Tibial artery (tissue), 4 donors: ENCODE measurements at regions of chr10 and their contacts with region 1.

Region 1: DNA sequence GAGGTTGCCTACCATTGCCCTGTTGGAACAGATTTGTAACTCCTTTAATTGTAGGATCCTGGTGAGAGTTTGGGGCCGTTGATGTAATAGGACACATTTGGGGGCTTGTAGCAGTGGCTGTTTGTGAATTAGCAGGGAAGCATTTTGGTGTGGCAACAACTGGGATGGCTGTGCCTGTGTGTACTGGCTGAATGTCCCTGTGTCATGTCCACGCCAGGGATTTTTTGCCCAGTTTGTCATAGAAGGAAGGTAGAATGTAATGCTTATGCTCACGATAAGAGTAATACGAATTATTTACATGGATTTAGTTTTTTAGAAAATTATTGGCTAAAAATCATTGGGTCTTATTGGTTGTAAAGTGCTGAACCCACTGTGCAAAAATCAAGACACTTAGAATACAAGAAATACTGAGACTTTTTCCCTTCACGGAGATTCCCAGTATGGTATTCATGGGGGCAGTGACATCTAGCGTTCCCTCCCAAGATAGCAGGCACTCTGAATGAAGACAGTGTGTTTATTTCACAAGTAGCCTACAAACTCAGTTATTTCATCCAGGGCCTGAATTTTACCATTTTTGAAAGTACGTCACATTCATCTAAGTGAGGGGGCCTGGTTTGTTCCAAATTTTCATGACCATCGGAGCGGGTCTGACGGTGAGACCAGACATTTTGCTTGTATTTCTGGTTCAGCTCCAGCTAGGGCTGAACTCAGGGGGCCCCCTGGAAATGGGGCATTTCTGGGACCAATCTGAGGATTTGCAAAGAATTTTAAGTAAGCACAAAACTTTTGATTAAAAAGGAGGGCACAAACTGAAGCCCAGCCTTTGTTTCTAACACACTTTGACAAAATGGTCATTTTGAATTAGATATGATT is 74.7 kb downstream of the CACNB2 start:
- DNase-seq: peak in 1 of 2 donors; percentile 53
- H3K4me3 ChIP-seq: no peak overlapping the region
- H3K27ac ChIP-seq: no peak overlapping the region
- H3K4me1 ChIP-seq: peaks cover 0 to 3% (median 0%) of the 10 kb centered on the region in 4 donors
- H3K27me3 ChIP-seq: no peaks in the 10 kb centered on the region
- CTCF ChIP-seq: peak; percentile 88 to 89

Region 2: DNA sequence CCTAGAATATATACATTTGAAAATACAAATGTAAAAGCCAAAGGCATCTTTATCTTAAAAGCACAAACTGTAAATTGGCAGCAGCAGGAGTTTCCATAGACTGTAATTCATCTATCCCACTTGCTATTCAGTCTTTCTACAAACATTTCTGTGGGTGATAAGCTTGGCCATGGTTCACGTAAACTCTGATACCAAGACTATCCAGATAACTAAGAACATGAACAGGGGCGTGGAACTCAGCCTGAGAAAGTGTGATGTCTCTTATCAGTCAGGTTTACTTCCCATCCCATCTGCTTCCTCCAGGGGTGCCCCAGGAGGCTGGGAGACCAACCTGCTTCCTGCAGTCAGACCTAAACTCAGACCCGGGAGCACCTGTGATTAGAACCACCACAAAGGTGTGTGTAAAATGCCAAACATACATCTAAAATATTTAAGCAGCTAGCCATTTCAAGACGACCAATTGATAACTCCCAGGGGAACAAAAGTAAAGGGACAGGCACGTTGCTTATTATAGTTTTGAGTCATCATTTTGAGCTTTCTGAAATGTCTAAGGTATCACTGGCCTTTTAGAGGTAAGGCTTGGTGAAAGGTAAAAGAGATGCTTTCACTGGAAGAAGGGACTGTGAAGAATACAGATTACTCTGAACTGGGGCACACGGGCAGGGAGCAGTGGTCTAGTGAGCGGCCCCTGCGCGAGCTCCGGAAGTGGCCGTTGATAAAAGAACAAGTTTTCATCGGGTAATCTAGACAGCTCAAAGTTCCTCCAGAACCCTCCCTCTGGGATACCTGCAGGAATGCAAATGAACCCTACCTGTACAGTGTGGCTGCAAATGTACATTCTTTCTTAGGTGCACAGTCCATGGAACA is 1449.2 kb before region 1 on chr10:
- intact Hi-C with region 1: no loop called
- DNase-seq: no peak
- H3K4me3 ChIP-seq: no peak overlapping the region
- H3K27ac ChIP-seq: no peak overlapping the region
- H3K4me1 ChIP-seq: peaks cover 0 to 5% (median 0%) of the 10 kb centered on the region in 4 donors
- H3K27me3 ChIP-seq: no peaks in the 10 kb centered on the region
- CTCF ChIP-seq: no peak

Region 3: DNA sequence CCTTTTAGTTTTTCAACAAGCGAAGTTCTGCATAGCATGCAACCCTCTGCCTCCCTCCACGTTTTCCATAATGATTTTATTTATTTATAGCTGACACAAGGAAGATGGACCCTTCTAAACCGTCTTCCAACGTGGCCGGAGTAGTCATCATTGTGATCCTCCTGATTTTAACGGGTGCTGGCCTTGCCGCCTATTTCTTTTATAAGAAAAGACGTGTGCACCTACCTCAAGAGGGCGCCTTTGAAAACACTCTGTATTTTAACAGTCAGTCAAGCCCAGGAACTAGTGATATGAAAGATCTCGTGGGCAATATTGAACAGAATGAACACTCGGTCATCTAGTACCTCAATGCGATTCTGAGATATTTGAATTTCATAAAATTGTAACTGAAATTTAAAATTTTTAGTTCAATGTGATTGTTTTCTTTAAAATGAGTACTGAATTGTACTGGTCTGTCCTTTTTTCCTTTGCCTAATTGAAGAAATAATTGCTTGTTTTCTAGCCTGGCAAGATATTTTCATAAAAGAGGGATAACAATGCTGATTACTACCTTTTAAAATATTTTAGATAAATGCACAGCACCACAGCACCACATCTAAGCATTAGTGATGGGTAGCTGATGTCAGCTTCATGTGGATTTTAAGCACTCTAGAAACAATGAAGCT is 304.7 kb before region 1 on chr10:
- intact Hi-C with region 1: loop called (anchors 5 kb)
- DNase-seq: peak in 1 of 2 donors; percentile 38
- H3K4me3 ChIP-seq: no peak overlapping the region
- H3K27ac ChIP-seq: no peak overlapping the region
- H3K4me1 ChIP-seq: peaks cover 0 to 13% (median 2%) of the 10 kb centered on the region in 4 donors
- H3K27me3 ChIP-seq: no peaks in the 10 kb centered on the region
- CTCF ChIP-seq: peak; percentile 59

Region 4: DNA sequence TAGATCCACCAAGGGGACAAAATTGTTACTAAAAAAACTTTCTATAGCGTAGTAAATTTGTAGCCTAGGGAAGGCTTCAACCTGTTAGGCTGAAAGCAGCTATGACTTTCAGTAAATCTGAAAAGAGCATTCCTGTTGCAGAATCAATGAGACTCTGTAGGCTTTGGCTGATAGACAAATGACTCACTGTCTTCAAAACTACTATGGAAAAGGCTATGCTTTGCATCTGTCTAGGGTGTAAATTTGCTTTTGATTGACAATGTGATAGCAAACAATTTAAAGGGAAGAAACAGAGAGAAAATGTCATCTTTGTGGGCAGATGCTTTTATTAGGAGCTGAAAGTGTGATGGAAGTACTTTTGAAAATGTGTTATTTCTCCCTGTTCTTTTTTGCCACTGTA is 504.9 kb after region 1 on chr10:
- intact Hi-C with region 1: no loop called
- DNase-seq: no peak
- H3K4me3 ChIP-seq: no peak overlapping the region
- H3K27ac ChIP-seq: no peak overlapping the region
- H3K4me1 ChIP-seq: no peaks in the 10 kb centered on the region
- H3K27me3 ChIP-seq: no peaks in the 10 kb centered on the region
- CTCF ChIP-seq: no peak